ENCODE measurements at regions of chr9 and their contacts with region 1.

Region 1: DNA sequence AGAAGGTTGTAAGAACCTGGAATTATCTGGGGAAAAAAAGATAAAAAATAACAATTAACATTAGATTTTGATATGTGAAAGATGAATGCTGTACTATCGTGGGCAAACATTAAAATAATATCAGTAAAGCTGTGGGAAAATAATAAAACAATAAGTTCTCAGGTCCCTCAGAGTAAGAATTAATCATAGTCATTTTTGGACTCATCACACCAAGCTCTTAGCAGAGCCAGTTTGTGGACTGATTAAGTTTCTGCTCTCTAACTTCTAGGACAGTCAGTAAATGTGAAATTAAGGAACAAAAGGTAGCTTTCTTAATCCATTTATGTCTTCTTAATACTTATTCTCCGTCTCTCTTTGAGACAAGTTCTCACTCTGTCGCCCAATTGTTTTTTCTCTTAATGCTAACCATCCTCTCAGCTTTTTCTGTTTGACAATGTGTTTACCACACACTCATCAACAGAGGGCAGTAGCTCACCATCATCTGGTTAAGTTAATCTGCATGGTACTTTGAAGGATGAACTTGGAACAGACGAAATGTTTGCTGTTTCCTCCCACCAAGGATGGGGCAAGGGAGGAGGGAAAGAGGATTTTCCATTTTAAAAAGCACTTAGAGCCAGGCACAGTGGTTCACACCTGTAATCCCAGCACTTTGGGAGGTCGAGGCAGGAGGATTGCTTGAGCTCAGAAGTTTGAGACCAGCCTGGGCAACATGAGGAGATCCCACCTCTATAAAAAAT is 5.3 kb upstream of the ACO1 start:
- DNase-seq: peak; percentile 83
- H3K4me3 ChIP-seq: no peak overlapping the region
- H3K27ac ChIP-seq: no peak overlapping the region
- H3K4me1 ChIP-seq: peaks cover 15% of the 10 kb centered on the region
- H3K27me3 ChIP-seq: peaks cover 0 to 5% of the 10 kb centered on the region in 2 experiments
- CTCF ChIP-seq: peak; percentile 60 to 72
- POLR2A ChIP-seq: no peak

Region 2: DNA sequence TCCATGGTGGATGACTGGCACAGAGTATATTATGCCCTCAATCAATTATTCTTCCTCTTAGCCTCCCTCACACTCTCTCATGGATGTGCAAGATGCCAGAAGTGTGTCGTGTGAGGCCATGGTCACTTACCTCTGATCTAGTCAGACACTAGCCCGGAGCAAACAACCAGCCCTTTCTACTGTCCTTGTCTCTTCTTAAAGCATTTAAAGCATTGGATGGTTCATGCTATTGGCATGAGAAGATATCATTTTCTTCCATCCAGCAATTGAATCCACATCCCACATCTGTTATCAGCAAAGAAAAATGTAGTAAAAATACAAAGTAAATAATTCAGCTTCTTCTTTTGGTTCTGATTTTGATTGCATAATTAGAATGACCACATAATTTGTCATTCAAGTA is 261.9 kb before region 1 on chr9:
- CTCF ChIA-PET with region 1: no interaction called
- POLR2A ChIA-PET with region 1: no interaction called
- dilution Hi-C with region 1: no loop called
- intact Hi-C with region 1: no loop called
- DNase-seq: no peak
- H3K4me3 ChIP-seq: no peak overlapping the region
- H3K27ac ChIP-seq: no peak overlapping the region
- H3K4me1 ChIP-seq: no peaks in the 10 kb centered on the region
- H3K27me3 ChIP-seq: no peaks in the 10 kb centered on the region
- CTCF ChIP-seq: no peak
- POLR2A ChIP-seq: no peak

Region 3: GRCh38 chr9:32326146-32326545 is 53.0 kb before region 1 on chr9:
- CTCF ChIA-PET with region 1: no interaction called
- POLR2A ChIA-PET with region 1: no interaction called
- dilution Hi-C with region 1: no loop called
- intact Hi-C with region 1: no loop called
- DNase-seq: no peak
- H3K4me3 ChIP-seq: no peak overlapping the region
- H3K27ac ChIP-seq: no peak overlapping the region
- H3K4me1 ChIP-seq: no peaks in the 10 kb centered on the region
- H3K27me3 ChIP-seq: no peaks in the 10 kb centered on the region
- CTCF ChIP-seq: no peak
- POLR2A ChIP-seq: no peak

Region 4: GRCh38 chr9:32395490-32396216 is 16.5 kb after region 1 on chr9:
- CTCF ChIA-PET with region 1: interaction called, 71 read pairs
- POLR2A ChIA-PET with region 1: interaction called, 3 read pairs
- dilution Hi-C with region 1: no loop called
- intact Hi-C with region 1: loop called (anchors 1 kb)
- DNase-seq: peak; percentile 95
- H3K4me3 ChIP-seq: no peak overlapping the region
- H3K27ac ChIP-seq: peak overlapping the region; percentile 60
- H3K4me1 ChIP-seq: peaks cover 29% of the 10 kb centered on the region
- H3K27me3 ChIP-seq: no peaks in the 10 kb centered on the region
- CTCF ChIP-seq: peak; percentile 20 to 46
- POLR2A ChIP-seq: peak; percentile 31

Region 5: GRCh38 chr9:32426278-32426939 is 47.2 kb after region 1 on chr9:
- CTCF ChIA-PET with region 1: interaction called, 383 read pairs
- POLR2A ChIA-PET with region 1: interaction called, 8 read pairs
- dilution Hi-C with region 1: no loop called
- intact Hi-C with region 1: no loop called
- DNase-seq: no peak
- H3K4me3 ChIP-seq: no peak overlapping the region
- H3K27ac ChIP-seq: no peak overlapping the region
- H3K4me1 ChIP-seq: peaks cover 50% of the 10 kb centered on the region
- H3K27me3 ChIP-seq: no peaks in the 10 kb centered on the region
- CTCF ChIP-seq: no peak
- POLR2A ChIP-seq: no peak

Region 6: GRCh38 chr9:32456564-32456963 is 77.4 kb after region 1 on chr9:
- CTCF ChIA-PET with region 1: interaction called, 26 read pairs
- POLR2A ChIA-PET with region 1: no interaction called
- dilution Hi-C with region 1: no loop called
- intact Hi-C with region 1: no loop called
- DNase-seq: peak; percentile 29
- H3K4me3 ChIP-seq: no peak overlapping the region
- H3K27ac ChIP-seq: no peak overlapping the region
- H3K4me1 ChIP-seq: no peaks in the 10 kb centered on the region
- H3K27me3 ChIP-seq: no peaks in the 10 kb centered on the region
- CTCF ChIP-seq: no peak
- POLR2A ChIP-seq: no peak

Region 7: DNA sequence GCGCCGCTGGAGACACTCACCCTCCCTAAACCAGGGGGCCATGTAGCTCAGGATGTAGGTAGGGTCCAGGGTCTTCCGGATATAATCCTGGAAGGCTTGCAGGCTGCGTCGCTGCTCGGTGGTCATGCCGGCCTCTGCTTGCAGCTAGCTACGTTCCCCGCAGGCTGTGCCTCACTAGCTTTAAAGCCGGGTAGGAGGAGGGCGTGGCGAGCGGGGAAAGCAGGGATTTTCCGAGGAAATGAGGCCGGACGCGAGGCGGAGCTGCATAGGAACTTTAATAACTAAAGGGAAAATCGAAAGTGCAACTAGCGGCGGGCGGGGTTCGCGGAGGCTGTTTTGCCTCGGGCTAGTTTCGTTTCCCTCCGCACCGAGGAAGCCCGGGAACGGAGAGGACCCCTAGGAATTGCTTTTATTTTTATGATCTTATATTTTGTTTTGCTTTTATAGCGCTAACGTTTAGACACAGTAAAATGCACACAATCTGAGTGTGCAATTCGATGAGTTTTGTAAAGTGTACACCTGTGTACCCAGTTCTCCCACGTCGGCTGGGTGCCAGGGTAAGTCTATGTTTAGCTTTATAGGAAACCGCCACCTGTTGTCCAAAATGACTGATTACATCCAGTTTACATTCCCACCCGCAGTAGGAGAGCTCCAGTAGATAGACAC is 147.0 kb after region 1 on chr9 and contains the start of gene RIGI:
- CTCF ChIA-PET with region 1: interaction called, 172 read pairs
- POLR2A ChIA-PET with region 1: interaction called, 15 read pairs
- dilution Hi-C with region 1: no loop called
- intact Hi-C with region 1: loop called (anchors 1 kb)
- DNase-seq: peak; percentile 97
- H3K4me3 ChIP-seq: peak within 1 kb of the TSS; percentile 78 to 88 (median 83)
- H3K27ac ChIP-seq: peak within 1 kb of the TSS; percentile 61
- H3K4me1 ChIP-seq: peaks cover 15% of the 10 kb centered on the region
- H3K27me3 ChIP-seq: no peaks in the 10 kb centered on the region
- CTCF ChIP-seq: peak; percentile 29 to 43
- POLR2A ChIP-seq: peak; percentile 87
- total RNA-seq, gene RIGI: 11.4 and 13.3 TPM in 2 replicates

Region 8: DNA sequence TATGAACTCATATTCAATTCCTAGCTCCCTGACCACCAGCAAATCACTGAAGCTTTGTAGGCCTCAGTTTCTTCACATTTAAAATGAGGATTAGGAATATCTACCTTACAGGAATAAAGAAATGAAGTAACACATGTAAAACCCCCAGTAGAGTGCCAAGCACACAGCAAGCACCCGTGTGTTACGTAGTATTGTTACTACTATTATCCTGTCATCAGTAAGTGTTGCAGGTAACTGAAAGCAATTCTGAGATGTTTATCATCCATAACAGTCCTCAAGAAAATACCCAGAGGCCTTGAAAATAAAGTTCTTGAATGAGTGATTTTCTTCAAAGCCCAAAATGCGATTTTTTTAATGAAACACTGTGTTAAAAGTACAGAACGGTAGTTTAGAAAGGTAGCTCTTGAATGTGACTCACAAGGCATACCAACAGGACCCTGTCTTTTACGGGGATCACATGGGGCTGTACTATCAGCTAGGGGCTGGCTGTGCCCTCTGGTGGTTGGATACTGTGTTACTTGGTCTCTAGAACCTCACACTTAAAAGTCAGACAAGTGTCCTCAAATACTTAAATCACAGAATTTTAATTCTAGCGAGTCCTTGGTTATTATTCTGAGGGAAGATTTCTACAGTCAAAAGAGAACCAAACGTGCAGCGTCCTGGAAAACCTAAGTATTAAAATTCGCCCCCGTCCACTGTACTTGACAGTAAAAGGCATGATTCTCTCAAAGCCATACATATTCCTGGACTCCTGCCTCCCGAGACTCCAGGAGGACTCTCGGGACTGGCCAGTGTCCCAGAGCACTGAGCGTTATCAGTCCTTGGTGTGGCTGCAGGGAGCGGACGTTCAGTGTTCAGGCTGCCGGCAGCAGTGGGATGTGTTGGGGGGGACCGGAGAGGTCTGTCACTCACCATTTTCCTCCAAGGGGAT is 193.1 kb after region 1 on chr9:
- CTCF ChIA-PET with region 1: interaction called, 1,384 read pairs
- POLR2A ChIA-PET with region 1: no interaction called
- dilution Hi-C with region 1: loop called (anchors 25 kb)
- intact Hi-C with region 1: loop called (anchors 1 kb)
- DNase-seq: peak; percentile 88
- H3K4me3 ChIP-seq: peak overlapping the region; percentile 78 to 89 (median 88)
- H3K27ac ChIP-seq: peak overlapping the region; percentile 19
- H3K4me1 ChIP-seq: peaks cover 18% of the 10 kb centered on the region
- H3K27me3 ChIP-seq: peaks cover 0 to 4% of the 10 kb centered on the region in 2 experiments
- CTCF ChIP-seq: peak; percentile 74 to 80
- POLR2A ChIP-seq: no peak

Region 9: GRCh38 chr9:32703635-32704034 is 324.5 kb after region 1 on chr9:
- CTCF ChIA-PET with region 1: interaction called, 12 read pairs
- POLR2A ChIA-PET with region 1: no interaction called
- dilution Hi-C with region 1: no loop called
- intact Hi-C with region 1: loop called (anchors 10 kb)
- DNase-seq: peak; percentile 9
- H3K4me3 ChIP-seq: no peak overlapping the region
- H3K27ac ChIP-seq: no peak overlapping the region
- H3K4me1 ChIP-seq: no peaks in the 10 kb centered on the region
- H3K27me3 ChIP-seq: no peaks in the 10 kb centered on the region
- CTCF ChIP-seq: peak in 1 of 2 donors; percentile 31
- POLR2A ChIP-seq: no peak

Measured in endothelial cell of umbilical vein (primary cell).